ENCODE measurements at regions of chr7 and their contacts with region 1.

Region 1: DNA sequence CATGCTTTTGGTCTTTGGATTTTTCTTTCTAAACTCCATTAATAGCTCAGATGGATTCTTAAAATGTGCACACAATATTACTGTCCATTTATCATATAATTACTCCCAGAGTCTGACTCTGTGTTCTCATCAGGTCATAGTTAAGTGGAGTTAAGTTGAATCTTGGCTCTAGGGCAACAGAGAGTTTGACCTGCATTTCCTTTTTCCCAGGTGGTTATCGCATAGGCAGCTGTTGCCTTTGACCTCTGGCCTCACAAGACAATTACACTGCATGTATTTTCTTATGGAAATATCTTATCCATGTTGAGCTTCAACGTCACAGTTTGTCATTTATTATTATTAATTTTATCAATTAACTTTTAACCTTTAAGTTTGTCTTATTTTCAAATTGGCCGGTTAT is 237.5 kb upstream of the HGF start:
- DNase-seq: no peak
- H3K4me3 ChIP-seq: no peak overlapping the region
- H3K27ac ChIP-seq: no peak overlapping the region
- H3K4me1 ChIP-seq: no peaks in the 10 kb centered on the region
- H3K27me3 ChIP-seq: no peaks in the 10 kb centered on the region
- CTCF ChIP-seq: no peak
- POLR2A ChIP-seq: no peak

Region 2: DNA sequence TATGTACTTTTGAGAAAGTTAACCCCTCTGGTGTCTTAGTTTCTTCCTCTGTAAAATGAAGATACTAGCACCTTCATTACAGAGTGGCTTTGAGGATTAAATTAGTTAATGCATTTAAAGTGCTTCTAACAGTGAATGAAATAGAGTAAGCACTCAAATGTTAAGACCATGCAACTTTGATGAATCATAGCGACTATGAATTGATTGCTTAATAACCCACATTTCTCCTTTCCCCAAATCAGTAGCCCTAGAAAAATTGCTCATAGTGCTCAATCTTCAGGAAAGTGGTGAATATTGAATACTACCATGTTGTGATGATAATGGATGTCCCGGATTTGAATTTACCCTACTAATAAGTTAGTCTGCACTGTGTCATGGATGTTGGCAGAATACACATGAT is 1320.7 kb before region 1 on chr7:
- intact Hi-C with region 1: loop called (anchors 5 kb)
- DNase-seq: no peak
- H3K4me3 ChIP-seq: no peak overlapping the region
- H3K27ac ChIP-seq: no peak overlapping the region
- H3K4me1 ChIP-seq: no peaks in the 10 kb centered on the region
- H3K27me3 ChIP-seq: no peaks in the 10 kb centered on the region
- CTCF ChIP-seq: no peak
- POLR2A ChIP-seq: no peak

Region 3: DNA sequence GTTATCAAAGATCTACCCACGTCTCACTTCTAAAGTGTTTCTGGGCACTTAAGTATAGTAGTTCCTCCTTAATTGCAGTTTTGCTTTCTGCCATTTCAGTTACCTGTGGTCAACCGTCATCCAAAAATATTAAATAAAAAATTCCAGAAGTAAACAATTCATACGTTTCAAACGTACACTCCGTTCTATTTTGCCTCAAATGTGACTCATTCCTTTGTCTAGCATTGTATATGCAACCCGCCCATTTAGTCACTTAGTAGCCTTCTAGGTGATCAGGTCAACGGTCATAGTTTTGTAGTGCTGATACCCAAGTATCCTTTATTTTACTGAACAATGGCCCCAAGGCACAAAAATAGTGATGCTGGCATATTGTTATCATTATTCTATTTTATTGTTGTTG is 271.2 kb before region 1 on chr7:
- intact Hi-C with region 1: no loop called
- DNase-seq: no peak
- H3K4me3 ChIP-seq: no peak overlapping the region
- H3K27ac ChIP-seq: no peak overlapping the region
- H3K4me1 ChIP-seq: no peaks in the 10 kb centered on the region
- H3K27me3 ChIP-seq: no peaks in the 10 kb centered on the region
- CTCF ChIP-seq: no peak
- POLR2A ChIP-seq: no peak

Region 4: GRCh38 chr7:81993186-81993585 is 14.1 kb before region 1 on chr7:
- intact Hi-C with region 1: no loop called
- DNase-seq: no peak
- H3K4me3 ChIP-seq: no peak overlapping the region
- H3K27ac ChIP-seq: no peak overlapping the region
- H3K4me1 ChIP-seq: no peaks in the 10 kb centered on the region
- H3K27me3 ChIP-seq: no peaks in the 10 kb centered on the region
- CTCF ChIP-seq: no peak
- POLR2A ChIP-seq: no peak

Region 5: GRCh38 chr7:82152858-82153257 is 145.5 kb after region 1 on chr7:
- intact Hi-C with region 1: no loop called
- DNase-seq: no peak
- H3K4me3 ChIP-seq: no peak overlapping the region
- H3K27ac ChIP-seq: no peak overlapping the region
- H3K4me1 ChIP-seq: no peaks in the 10 kb centered on the region
- H3K27me3 ChIP-seq: no peaks in the 10 kb centered on the region
- CTCF ChIP-seq: no peak
- POLR2A ChIP-seq: no peak

Measured in uterus (tissue), 4 donors.